ENCODE measurements at regions of chr2 and their contacts with region 1.

Region 1: DNA sequence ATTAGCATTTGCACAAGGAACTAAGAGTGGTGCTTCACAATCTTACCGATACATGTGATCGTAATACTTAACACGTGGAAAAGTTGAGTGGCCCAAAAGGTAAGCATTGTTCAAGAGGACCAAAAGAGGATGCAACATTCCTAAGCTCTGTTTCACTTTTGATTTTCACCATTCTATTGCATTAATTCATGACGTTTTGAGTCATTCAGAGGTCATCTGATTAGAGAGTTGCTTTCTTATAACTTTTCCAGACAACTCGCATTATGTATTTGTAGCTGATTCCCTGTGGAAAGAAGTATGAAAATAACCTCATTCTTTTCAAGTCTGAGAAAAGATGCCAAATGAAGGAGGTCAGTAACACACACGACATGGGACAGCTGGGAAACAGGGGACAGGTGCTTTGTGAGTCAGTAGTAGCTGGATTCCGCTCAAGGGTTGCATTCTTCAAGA is 344.4 kb downstream of the RND3 start:
- DNase-seq: peak; percentile 85
- H3K4me3 ChIP-seq: no peak overlapping the region
- H3K27ac ChIP-seq: peak overlapping the region; percentile 99
- H3K4me1 ChIP-seq: peaks cover 48% of the 10 kb centered on the region
- H3K27me3 ChIP-seq: no peaks in the 10 kb centered on the region
- CTCF ChIP-seq: no peak
- POLR2A ChIP-seq: no peak

Region 2: GRCh38 chr2:149733936-149734685 is 409.0 kb before region 1 on chr2:
- CTCF ChIA-PET with region 1: no interaction called
- POLR2A ChIA-PET with region 1: no interaction called
- dilution Hi-C with region 1: no loop called
- intact Hi-C with region 1: loop called (anchors 1 kb)
- DNase-seq: peak; percentile 94
- H3K4me3 ChIP-seq: no peak overlapping the region
- H3K27ac ChIP-seq: peak overlapping the region; percentile 97
- H3K4me1 ChIP-seq: peaks cover 39% of the 10 kb centered on the region
- H3K27me3 ChIP-seq: no peaks in the 10 kb centered on the region
- CTCF ChIP-seq: no peak
- POLR2A ChIP-seq: no peak

Region 3: DNA sequence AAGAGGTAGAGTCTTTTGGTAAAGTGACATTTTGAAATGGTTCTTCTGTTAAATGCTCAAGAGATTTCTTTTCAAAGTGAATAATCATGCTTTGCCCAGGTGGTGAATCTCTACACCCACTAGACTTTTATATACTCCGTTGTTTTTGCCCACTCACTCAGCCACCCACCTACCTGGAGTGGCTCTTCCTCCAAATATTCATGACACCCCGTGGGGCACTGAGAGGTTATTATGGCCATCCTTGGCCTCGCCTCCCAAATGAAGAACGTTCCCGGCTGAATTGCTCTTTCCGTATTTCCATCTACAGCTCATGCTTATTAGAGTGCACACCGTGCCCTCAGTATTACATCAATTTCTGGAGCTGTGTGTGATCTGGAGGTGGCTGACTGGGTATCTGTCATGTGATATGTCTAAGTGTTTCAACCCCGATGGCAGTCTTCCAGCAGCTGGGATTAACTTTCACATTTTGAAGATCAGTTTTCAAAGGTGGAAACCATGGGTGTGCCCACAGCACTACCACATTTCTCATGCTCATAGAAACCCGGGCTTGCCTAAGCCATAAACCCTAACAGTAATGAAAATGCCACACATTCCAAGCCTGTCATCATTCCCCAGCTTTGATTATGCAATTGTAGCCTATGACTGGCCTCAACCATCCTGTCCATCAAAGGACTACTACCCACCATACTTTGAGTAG is 148.9 kb before region 1 on chr2:
- CTCF ChIA-PET with region 1: no interaction called
- POLR2A ChIA-PET with region 1: interaction called, 4 read pairs
- dilution Hi-C with region 1: no loop called
- intact Hi-C with region 1: loop called (anchors 1 kb)
- DNase-seq: no peak
- H3K4me3 ChIP-seq: no peak overlapping the region
- H3K27ac ChIP-seq: no peak overlapping the region
- H3K4me1 ChIP-seq: peaks cover 14% of the 10 kb centered on the region
- H3K27me3 ChIP-seq: no peaks in the 10 kb centered on the region
- CTCF ChIP-seq: no peak
- POLR2A ChIP-seq: no peak

Region 4: DNA sequence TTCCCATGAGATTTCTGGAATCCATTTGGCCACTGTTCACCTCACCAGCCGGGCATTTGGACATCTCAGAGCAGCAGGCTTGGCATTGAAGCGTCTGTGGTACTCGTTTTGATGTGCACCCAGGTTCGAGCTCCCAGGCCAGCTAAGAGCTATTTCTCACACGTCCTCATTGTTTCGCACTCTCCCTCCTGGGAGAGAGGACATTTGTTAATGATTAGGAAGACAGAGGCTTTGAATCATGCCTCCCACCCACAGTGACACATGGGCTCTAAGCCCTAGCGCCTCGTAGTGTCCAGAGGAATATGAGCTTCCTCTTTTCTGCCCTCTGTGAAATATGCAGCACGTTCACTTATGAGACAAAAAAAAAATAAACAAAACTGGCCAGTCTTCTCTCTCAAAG is 17.4 kb before region 1 on chr2:
- CTCF ChIA-PET with region 1: interaction called, 14 read pairs
- POLR2A ChIA-PET with region 1: interaction called, 4 read pairs
- dilution Hi-C with region 1: no loop called
- intact Hi-C with region 1: loop called (anchors 2 kb)
- DNase-seq: peak; percentile 7
- H3K4me3 ChIP-seq: no peak overlapping the region
- H3K27ac ChIP-seq: peak overlapping the region; percentile 42
- H3K4me1 ChIP-seq: peaks cover 25% of the 10 kb centered on the region
- H3K27me3 ChIP-seq: no peaks in the 10 kb centered on the region
- CTCF ChIP-seq: no peak
- POLR2A ChIP-seq: no peak

Region 5: GRCh38 chr2:150410809-150411208 is 267.7 kb after region 1 on chr2:
- CTCF ChIA-PET with region 1: interaction called, 4 read pairs
- POLR2A ChIA-PET with region 1: interaction called, 3 read pairs
- dilution Hi-C with region 1: no loop called
- intact Hi-C with region 1: loop called (anchors 1 kb)
- DNase-seq: peak; percentile 85
- H3K4me3 ChIP-seq: no peak overlapping the region
- H3K27ac ChIP-seq: peak overlapping the region; percentile 95
- H3K4me1 ChIP-seq: peaks cover 40% of the 10 kb centered on the region
- H3K27me3 ChIP-seq: no peaks in the 10 kb centered on the region
- CTCF ChIP-seq: no peak
- POLR2A ChIP-seq: peak; percentile 39

Region 6: DNA sequence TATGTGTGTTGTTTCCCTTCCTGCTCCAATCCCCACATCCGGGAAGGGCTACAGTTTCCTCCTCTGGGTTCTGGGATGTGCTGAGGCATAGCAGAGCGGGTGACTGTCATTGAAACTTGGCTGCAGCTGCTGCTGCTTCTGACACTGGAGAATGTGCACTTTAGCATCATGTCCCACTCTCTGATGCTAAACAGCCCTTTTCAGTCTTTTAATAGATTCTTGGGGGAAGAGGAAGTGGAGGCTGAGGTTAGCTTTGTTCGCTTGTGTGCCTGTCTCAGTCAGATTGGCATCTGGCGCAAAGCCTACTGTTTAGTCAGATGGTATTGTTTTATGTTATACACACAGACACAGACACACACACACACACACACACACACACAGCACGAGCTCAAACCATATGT is 480.9 kb after region 1 on chr2:
- CTCF ChIA-PET with region 1: no interaction called
- POLR2A ChIA-PET with region 1: no interaction called
- dilution Hi-C with region 1: no loop called
- intact Hi-C with region 1: loop called (anchors 5 kb)
- DNase-seq: peak; percentile 89
- H3K4me3 ChIP-seq: no peak overlapping the region
- H3K27ac ChIP-seq: peak overlapping the region; percentile 68
- H3K4me1 ChIP-seq: peaks cover 49% of the 10 kb centered on the region
- H3K27me3 ChIP-seq: no peaks in the 10 kb centered on the region
- CTCF ChIP-seq: no peak
- POLR2A ChIP-seq: no peak

Measured in endothelial cell of umbilical vein (primary cell).